ENCODE measurements at regions of chr1 and their contacts with region 1.

Region 1: DNA sequence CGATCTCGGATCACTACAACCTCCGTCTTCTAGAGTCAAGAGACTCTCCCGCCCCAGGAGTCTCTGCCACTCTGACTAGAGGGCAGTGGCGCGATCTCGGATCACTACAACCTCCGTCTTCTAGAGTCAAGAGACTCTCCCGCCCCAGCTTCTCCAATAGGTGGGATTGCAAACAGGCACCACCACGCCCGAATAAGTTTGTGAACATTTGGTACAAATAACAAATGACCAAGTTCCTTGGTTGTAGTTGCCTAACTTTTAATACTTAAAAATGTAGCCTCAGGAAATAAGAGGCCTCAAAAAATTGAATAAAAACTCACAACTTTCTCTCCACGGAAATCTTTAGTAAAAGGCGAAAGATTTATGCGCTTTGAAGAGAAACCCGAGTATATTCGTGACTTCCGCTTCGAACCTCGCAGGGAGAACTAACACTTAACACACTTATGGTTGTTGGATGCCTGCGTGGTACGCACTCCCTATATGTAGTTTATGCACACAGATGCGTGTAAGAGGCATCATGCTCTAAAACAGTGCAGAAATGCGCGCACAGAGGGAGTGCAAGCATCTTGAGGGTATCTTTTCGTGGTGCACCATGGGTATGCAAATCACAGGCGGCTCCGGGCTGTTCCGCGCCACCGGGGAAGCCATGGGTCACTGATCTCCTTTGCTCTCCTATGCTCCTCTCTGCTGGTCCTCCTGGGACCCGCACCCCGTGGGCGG is 11.4 kb downstream of the BTBD19 start:
- DNase-seq: peak; percentile 94
- H3K4me3 Mint-ChIP-seq: peak overlapping the region; percentile 92
- H3K27ac Mint-ChIP-seq: peak overlapping the region; percentile 99
- H3K4me1 Mint-ChIP-seq: peaks cover 40% of the 10 kb centered on the region
- H3K27me3 Mint-ChIP-seq: no peaks in the 10 kb centered on the region

Region 2: DNA sequence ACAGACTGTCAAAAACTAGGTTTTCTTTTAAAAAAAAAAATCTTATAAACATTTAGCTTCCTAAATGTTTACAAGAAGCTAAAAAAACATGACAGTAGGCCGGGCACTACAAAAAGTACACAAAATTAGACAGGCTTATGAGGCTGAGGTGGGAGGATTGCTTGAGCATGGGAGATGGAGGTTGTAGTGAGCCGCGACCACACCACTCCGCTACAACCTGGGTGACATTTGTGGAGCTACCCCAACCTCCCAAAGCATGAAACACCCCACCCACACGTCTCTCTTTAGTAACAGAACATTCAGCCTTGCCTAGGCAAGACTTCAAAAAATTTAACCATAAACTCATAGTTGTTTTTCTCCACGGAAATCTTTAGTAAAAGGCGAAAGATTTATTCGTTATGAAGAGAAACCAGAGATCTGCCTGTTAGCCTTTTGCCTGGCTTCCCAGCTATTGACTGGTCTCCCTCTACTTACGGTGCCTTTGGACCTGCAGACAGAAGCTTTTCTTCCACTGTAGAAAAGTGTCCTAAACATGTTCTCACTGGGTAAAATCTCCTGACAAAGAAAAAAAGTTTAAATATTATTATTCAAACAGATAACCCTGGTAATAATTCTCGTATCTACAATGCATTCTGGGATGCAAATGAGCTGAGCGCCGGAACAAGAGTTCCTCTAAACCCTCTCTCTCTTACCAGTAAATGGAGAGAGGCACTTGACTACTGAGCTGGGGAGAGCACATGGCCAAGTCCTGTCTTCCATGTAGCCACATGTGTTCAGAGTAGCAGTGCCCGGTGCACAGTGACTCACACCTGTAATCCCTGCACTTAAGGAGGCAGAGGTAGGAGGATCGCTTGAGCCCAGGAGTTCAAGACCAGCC is 98.0 kb before region 1 on chr1:
- intact Hi-C with region 1: loop called (anchors 1 kb)
- DNase-seq: peak; percentile 94
- H3K4me3 Mint-ChIP-seq: peak overlapping the region; percentile 75
- H3K27ac Mint-ChIP-seq: peak overlapping the region; percentile 97
- H3K4me1 Mint-ChIP-seq: peaks cover 69% of the 10 kb centered on the region
- H3K27me3 Mint-ChIP-seq: no peaks in the 10 kb centered on the region

Region 3: DNA sequence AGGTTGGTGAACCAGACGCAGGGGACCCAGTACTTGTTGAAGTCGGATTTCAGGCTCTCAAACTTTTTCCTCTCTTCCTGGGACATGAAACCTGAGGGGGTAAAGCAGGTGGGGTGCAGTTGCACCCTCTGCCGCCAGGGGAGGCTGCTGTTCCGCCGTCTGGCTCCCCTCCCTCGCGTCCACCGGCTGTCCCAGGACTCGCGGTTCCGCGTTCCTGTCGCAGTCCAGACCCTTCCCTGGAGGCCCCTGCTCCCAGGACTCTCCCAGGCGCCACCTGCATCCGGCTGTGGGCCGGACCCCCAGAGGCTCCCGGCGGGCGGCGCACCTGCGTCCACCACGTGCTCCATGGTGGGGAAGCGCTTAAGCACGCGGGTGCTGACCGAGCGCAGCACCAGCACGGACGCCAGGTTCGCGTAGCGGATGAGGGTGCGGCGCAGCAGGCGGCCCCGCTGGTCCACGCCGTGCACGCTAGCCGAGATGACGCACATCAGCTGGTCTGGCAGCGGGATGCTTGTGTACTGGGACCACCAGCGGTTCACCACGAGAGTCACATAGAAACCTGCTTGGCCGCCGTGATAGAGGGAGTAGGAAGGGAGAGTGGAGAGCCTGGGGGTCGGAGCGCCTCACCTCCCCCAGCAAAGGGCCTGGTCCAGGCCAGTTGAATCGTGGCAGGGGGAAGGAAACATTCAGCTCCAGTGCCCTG is 33.5 kb before region 1 on chr1:
- intact Hi-C with region 1: loop called (anchors 1 kb)
- DNase-seq: peak; percentile 93
- H3K4me3 Mint-ChIP-seq: peak overlapping the region; percentile 83
- H3K27ac Mint-ChIP-seq: peak overlapping the region; percentile 85
- H3K4me1 Mint-ChIP-seq: peaks cover 28% of the 10 kb centered on the region
- H3K27me3 Mint-ChIP-seq: no peaks in the 10 kb centered on the region

Region 4: DNA sequence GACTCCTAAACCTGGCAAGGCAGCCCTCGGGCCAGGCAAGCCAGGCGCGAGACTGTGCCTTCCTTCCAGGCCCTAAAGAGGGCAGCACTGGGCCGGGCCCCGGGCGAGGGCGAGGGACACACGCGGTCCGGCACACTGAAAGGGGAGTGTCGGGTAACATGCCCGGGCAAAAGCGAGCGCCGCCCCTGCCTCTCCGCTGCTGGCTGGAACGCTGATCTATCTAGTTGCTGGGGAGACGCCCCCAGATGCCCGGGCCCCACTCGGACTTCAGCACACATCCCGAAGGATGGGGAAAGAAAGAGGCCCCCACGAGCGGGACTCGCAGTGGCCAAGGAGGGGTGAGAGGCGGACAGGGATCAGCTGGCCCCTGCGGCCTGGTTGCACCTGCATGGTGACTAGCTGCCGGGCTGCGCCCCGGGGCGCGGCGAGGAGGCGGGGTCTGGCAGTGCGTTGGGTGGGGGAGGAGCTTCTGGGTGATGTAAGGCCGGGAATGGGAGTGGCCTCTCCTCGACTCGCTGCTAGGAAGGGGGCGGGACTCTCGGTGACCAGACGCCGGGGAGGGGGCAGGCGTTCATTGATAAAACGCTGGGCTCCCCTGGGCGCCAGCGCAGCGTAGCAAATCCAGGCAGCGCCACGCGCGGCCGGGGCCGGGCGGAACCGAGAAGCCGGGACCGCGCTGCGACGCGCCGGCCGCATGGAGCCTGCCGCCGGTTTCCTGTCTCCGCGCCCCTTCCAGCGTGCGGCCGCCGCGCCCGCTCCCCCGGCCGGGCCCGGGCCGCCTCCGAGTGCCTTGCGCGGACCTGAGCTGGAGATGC is 19.8 kb before region 1 on chr1 and contains the start of gene PLK3:
- intact Hi-C with region 1: loop called (anchors 1 kb)
- DNase-seq: peak; percentile 99
- H3K4me3 Mint-ChIP-seq: peak within 1 kb of the TSS; percentile 99
- H3K27ac Mint-ChIP-seq: peak within 1 kb of the TSS; percentile 100
- H3K4me1 Mint-ChIP-seq: peaks cover 35% of the 10 kb centered on the region
- H3K27me3 Mint-ChIP-seq: no peaks in the 10 kb centered on the region
- total RNA-seq, gene PLK3: 190 and 205 TPM in 2 replicates

Region 5: DNA sequence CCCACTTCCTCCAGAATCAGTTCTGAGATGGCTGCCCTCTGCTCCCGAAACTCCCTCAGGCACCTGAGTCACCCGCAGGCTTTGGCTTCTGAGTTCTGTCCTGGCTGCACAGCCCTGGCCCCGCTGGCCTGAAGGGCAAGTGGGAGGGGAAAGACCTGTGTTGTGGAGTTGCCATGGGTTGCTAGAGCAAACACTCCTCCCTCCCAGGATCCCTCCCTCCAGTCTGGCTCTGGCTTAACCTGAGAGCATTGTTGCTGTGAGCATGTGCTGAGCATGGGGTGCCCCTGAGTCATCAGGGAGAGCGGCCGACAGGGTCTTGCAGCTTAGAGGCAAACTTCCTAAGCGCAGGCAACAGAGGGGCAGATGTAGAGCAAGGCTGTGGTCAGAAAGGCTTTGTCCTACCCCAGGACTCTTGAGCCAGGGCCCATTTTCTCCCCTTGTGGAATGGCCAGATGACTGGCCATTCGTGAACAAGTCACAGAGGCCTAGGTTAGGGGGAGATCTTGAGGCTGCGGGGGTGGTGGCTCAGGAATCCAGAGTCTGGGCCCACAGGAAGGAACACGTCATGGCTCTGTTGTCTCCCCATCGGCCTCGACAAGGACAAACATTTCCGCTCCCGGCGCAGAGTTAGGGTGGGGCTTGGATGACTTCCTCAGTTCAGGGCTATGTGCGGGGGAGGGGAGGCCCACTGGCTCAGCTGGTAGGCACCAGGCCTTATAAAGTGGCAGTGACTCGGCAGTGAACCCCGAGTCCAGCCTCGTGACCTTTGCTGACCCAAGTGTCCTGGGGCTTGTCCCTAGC is 12.3 kb before region 1 on chr1 and contains the start of gene DYNLT4:
- intact Hi-C with region 1: loop called (anchors 1 kb)
- DNase-seq: peak; percentile 96
- H3K4me3 Mint-ChIP-seq: peak within 1 kb of the TSS; percentile 81
- H3K27ac Mint-ChIP-seq: peak within 1 kb of the TSS; percentile 99
- H3K4me1 Mint-ChIP-seq: peaks cover 81% of the 10 kb centered on the region
- H3K27me3 Mint-ChIP-seq: peaks cover 2% of the 10 kb centered on the region
- total RNA-seq, gene DYNLT4: 0.28 TPM in 1 of 2 replicates, not detected in the other

Region 6: GRCh38 chr1:44941424-44942324 is 121.9 kb after region 1 on chr1:
- intact Hi-C with region 1: no loop called
- DNase-seq: no peak
- H3K4me3 Mint-ChIP-seq: peak overlapping the region; percentile 7
- H3K27ac Mint-ChIP-seq: peak overlapping the region; percentile 59
- H3K4me1 Mint-ChIP-seq: peaks cover 12% of the 10 kb centered on the region
- H3K27me3 Mint-ChIP-seq: no peaks in the 10 kb centered on the region

Measured in activated CD4-positive, alpha-beta T cell treated with anti-CD3 and anti-CD28 coated beads, Interleukin-2, amount 10 ng/mL, durations not matched to agents 24 days and 14 days (primary cell).